BJ (cell line): ENCODE measurements at regions of chr17 and their contacts with region 1.

Region 1: DNA sequence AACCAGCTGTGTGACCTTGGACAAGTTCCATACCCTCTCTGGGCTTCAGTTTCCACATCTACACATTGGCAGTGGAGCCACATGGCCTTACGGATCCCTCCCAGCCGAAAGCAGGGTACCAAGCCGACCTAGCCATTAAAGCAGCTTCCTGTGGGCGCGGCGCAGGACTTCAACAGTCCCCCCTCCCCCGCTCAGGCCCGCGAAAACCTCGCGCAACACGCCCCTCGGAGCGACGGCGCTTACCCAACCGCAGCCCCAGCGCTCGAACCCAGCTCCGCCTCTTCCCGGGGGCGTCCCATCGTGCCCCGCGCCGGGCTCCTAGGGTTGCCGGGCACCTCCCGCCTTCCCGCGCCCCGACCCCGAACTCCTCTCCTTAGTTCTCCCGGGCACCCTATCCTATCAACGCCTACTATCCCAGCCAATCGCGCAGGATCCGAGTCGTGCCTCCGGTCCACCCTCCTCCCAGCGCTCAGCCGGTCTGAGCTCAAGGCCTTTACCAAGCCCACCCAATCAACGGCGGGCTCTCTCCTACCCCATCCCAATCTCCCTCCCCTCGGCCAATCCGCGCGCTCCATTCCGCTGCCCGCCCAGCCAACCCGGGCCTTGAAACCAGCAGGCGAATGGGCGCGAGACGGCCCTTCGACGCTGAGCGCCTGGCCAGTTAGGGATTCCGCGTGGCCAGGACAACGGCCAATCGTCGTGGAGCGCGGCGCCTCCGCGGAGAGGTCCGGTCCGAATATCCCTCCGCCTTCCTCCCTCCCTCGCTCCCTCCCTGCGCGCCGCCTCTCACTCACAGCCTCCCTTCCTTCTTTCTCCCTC is at the start of gene KPNB1:
- DNase-seq: peak; percentile 99
- H3K4me3 ChIP-seq: peak within 1 kb of the TSS; percentile 94
- H3K27me3 ChIP-seq: no peaks in the 10 kb centered on the region
- CTCF ChIP-seq: no peak
- polyA plus RNA-seq, gene KPNB1: 171 and 184 TPM in 2 replicates

Region 2: GRCh38 chr17:47615766-47616424 is 33.5 kb before region 1 on chr17:
- CTCF ChIA-PET with region 1: interaction called, 11 read pairs
- POLR2A ChIA-PET with region 1: no interaction called
- DNase-seq: no peak
- H3K4me3 ChIP-seq: no peak overlapping the region
- H3K27me3 ChIP-seq: no peaks in the 10 kb centered on the region
- CTCF ChIP-seq: peak; percentile 56

Region 3: GRCh38 chr17:47632991-47633390 is 16.4 kb before region 1 on chr17:
- CTCF ChIA-PET with region 1: no interaction called
- POLR2A ChIA-PET with region 1: interaction called, 13 read pairs
- DNase-seq: no peak
- H3K4me3 ChIP-seq: no peak overlapping the region
- H3K27me3 ChIP-seq: no peaks in the 10 kb centered on the region
- CTCF ChIP-seq: no peak

Region 4: GRCh38 chr17:47663912-47664625 is 14.7 kb after region 1 on chr17:
- CTCF ChIA-PET with region 1: interaction called, 29 read pairs
- POLR2A ChIA-PET with region 1: interaction called, 5 read pairs
- DNase-seq: no peak
- H3K4me3 ChIP-seq: no peak overlapping the region
- H3K27me3 ChIP-seq: no peaks in the 10 kb centered on the region
- CTCF ChIP-seq: peak; percentile 81